ENCODE measurements at regions of chr4 and their contacts with region 1.

Region 1: DNA sequence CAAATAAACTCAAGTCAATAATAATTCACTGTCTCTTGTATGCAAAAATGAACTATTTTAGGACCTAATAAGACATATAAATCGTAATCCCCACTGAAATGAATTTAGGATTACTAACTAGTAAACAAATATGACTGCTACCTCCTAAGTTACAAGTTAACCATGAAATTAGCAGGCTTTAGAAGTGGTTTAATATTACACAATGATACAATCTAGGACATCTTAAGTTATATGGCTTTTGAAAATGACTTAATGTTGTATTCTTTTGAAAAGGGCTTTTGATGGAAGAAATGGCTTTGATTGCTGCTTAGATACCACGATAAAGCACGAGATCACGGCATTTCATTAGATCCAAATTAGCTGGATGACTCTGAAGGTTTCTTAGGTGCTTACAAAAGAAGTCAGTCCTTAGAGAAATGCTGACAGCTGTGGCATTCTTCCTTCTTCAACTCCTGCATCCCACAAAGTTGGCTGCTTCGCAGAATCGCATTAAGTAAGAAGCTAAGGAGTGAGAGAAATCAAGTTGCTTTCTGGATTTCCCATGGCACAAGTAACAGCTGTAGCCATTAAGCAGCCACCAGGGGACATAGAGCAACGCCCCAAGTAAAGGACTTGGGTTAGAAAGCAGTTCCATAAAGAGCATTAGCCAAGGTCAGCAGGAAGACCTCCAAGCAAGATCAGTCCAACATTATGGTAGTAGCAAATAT is 6.9 kb downstream of the SLC10A7 start:
- DNase-seq: no peak
- ATAC-seq: no peak
- H3K4me3 ChIP-seq: no peak overlapping the region
- H3K27ac ChIP-seq: no peak overlapping the region
- H3K4me1 ChIP-seq: peaks cover 0 to 7% (median 5%) of the 10 kb centered on the region in 9 donors
- H3K27me3 ChIP-seq: no peaks in the 10 kb centered on the region
- CTCF ChIP-seq: no peak

Region 2: GRCh38 chr4:145694929-145695328 is 819.9 kb before region 1 on chr4:
- intact Hi-C with region 1: no loop called
- DNase-seq: no peak
- ATAC-seq: no peak
- H3K4me3 ChIP-seq: no peak overlapping the region
- H3K27ac ChIP-seq: no peak overlapping the region
- H3K4me1 ChIP-seq: peaks cover 0 to 3% (median 0%) of the 10 kb centered on the region in 9 donors
- H3K27me3 ChIP-seq: no peaks in the 10 kb centered on the region
- CTCF ChIP-seq: no peak

Region 3: DNA sequence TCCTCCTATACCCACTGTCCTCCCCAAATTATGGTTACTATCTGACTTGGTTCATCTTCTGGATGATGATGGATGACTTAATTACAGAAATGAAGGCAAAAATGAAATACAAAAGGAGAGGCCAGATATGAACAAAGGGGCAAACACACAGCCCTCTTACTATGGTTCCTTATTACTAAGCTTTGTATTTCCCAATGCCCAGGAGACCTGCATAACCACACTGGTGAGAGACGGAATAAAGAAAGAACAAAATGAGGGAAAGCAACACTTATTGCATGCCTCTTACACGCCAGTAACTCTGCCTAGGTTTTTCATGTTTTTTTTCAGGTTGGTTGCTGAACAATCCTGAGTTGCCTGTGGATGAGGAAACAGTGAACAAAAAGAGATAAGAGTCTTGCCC is 113.5 kb before region 1 on chr4:
- intact Hi-C with region 1: loop called in 1 of 10 experiments (anchors 5 kb)
- DNase-seq: no peak
- ATAC-seq: no peak
- H3K4me3 ChIP-seq: no peak overlapping the region
- H3K27ac ChIP-seq: no peak overlapping the region
- H3K4me1 ChIP-seq: peaks cover 0 to 5% (median 0%) of the 10 kb centered on the region in 9 donors
- H3K27me3 ChIP-seq: no peaks in the 10 kb centered on the region
- CTCF ChIP-seq: no peak

Region 4: DNA sequence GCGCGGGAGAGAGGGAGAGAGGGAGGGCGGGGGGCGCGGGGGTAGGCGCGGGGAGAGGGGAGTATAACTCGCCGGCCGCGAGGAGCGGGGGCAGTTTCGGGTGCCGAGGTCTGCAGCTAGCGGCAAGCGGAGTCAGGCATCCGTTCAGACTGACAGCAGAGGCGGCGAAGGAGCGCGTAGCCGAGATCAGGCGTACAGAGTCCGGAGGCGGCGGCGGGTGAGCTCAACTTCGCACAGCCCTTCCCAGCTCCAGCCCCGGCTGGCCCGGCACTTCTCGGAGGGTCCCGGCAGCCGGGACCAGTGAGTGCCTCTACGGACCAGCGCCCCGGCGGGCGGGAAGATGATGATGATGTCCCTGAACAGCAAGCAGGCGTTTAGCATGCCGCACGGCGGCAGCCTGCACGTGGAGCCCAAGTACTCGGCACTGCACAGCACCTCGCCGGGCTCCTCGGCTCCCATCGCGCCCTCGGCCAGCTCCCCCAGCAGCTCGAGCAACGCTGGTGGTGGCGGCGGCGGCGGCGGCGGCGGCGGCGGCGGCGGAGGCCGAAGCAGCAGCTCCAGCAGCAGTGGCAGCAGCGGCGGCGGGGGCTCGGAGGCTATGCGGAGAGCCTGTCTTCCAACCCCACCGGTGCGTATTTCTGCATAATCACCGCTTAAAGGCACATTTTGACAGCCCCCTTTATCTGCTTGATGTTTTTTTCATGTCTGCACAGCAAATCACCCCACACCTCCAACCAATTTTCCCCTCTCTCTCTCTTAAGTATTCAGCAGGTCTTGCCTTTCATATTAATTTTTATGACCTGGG is 124.2 kb after region 1 on chr4 and contains the start of gene POU4F2:
- intact Hi-C with region 1: no loop called
- DNase-seq: no peak
- ATAC-seq: peak in 1 of 8 donors; percentile 15
- H3K4me3 ChIP-seq: peak within 1 kb of the TSS in 8 of 10 donors; percentile 1 to 37 (median 16)
- H3K27ac ChIP-seq: no peak within 1 kb of the TSS
- H3K4me1 ChIP-seq: peaks cover 0 to 30% (median 15%) of the 10 kb centered on the region in 9 donors
- H3K27me3 ChIP-seq: peaks cover 29 to 100% (median 92%) of the 10 kb centered on the region in 7 donors
- CTCF ChIP-seq: no peak
- total RNA-seq, gene POU4F2: not detected

Measured in heart right ventricle (tissue), 16 donors.